T-cell (primary cell): ENCODE measurements at regions of chr15 and their contacts with region 1.

Region 1: GRCh38 chr15:85412956-85413854 is 32.8 kb downstream of the AKAP13 start:
- DNase-seq: peak; percentile 30 to 80 (median 56)
- ATAC-seq: peak; percentile 97 to 100 (median 100)
- H3K4me3 ChIP-seq: no peak overlapping the region
- H3K4me3 Mint-ChIP-seq: peak overlapping the region; percentile 10 to 60 (median 28)
- H3K27ac ChIP-seq: peak overlapping the region; percentile 71
- H3K27ac Mint-ChIP-seq: peak overlapping the region; percentile 89 to 92
- H3K4me1 ChIP-seq: peaks cover 9 to 13% of the 10 kb centered on the region in 2 experiments
- H3K4me1 Mint-ChIP-seq: peaks cover 64 to 76% (median 74%) of the 10 kb centered on the region in 3 donors
- H3K27me3 ChIP-seq: no peaks in the 10 kb centered on the region
- H3K27me3 Mint-ChIP-seq: no peaks in the 10 kb centered on the region

Region 2: DNA sequence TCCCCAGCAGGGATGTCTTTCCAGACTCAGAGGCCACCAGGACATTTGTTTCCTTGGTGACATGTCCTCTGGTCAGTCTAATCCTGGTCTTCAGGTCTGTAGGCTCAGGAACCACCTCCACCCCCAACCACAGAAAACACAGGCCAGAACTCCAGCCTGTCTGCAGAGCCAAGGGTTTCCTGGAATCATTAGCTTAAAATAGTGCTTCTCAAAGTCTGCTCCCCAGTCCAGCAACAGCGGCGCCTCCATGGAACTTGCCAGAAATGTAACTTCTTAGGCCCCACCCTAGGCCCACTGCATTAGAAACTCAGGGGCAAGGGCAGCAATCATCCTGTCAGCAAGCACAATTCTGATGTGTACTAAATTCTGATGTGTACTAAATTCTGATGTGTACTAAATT is 508.8 kb before region 1 on chr15:
- CTCF ChIA-PET with region 1: no interaction called
- POLR2A ChIA-PET with region 1: no interaction called
- DNase-seq: no peak
- ATAC-seq: no peak
- H3K4me3 ChIP-seq: no peak overlapping the region
- H3K4me3 Mint-ChIP-seq: no peak overlapping the region
- H3K27ac ChIP-seq: no peak overlapping the region
- H3K27ac Mint-ChIP-seq: no peak overlapping the region
- H3K4me1 ChIP-seq: no peaks in the 10 kb centered on the region
- H3K4me1 Mint-ChIP-seq: no peaks in the 10 kb centered on the region
- H3K27me3 ChIP-seq: peaks cover 0 to 3% of the 10 kb centered on the region in 2 experiments
- H3K27me3 Mint-ChIP-seq: peaks cover 0 to 2% of the 10 kb centered on the region in 2 donors

Region 3: GRCh38 chr15:85296615-85297402 is 116.4 kb before region 1 on chr15:
- CTCF ChIA-PET with region 1: interaction called, 13 to 61 read pairs
- POLR2A ChIA-PET with region 1: no interaction called
- DNase-seq: peak; percentile 29 to 83 (median 58)
- ATAC-seq: peak; percentile 92 to 99 (median 97)
- H3K4me3 ChIP-seq: peak overlapping the region in 1 of 2 donors; percentile 15
- H3K4me3 Mint-ChIP-seq: peak overlapping the region; percentile 49 to 59 (median 51)
- H3K27ac ChIP-seq: no peak overlapping the region
- H3K27ac Mint-ChIP-seq: peak overlapping the region; percentile 13 to 18
- H3K4me1 ChIP-seq: peaks cover 4 to 5% of the 10 kb centered on the region in 2 experiments
- H3K4me1 Mint-ChIP-seq: peaks cover 12 to 14% (median 12%) of the 10 kb centered on the region in 3 donors
- H3K27me3 ChIP-seq: peaks cover 0 to 7% of the 10 kb centered on the region in 2 experiments
- H3K27me3 Mint-ChIP-seq: peaks cover 0 to 6% of the 10 kb centered on the region in 2 donors

Region 4: GRCh38 chr15:85330901-85331588 is 82.2 kb before region 1 on chr15:
- CTCF ChIA-PET with region 1: interaction called, 3 to 23 read pairs
- POLR2A ChIA-PET with region 1: no interaction called
- DNase-seq: peak; percentile 28 to 79 (median 50)
- ATAC-seq: peak; percentile 67 to 84 (median 78)
- H3K4me3 ChIP-seq: peak overlapping the region; percentile 58 to 67
- H3K4me3 Mint-ChIP-seq: peak overlapping the region; percentile 84 to 94 (median 90)
- H3K27ac ChIP-seq: peak overlapping the region; percentile 88
- H3K27ac Mint-ChIP-seq: peak overlapping the region; percentile 97 to 98
- H3K4me1 ChIP-seq: peaks cover 15 to 29% of the 10 kb centered on the region in 2 experiments
- H3K4me1 Mint-ChIP-seq: peaks cover 49 to 60% (median 52%) of the 10 kb centered on the region in 3 donors
- H3K27me3 ChIP-seq: no peaks in the 10 kb centered on the region
- H3K27me3 Mint-ChIP-seq: no peaks in the 10 kb centered on the region

Region 5: DNA sequence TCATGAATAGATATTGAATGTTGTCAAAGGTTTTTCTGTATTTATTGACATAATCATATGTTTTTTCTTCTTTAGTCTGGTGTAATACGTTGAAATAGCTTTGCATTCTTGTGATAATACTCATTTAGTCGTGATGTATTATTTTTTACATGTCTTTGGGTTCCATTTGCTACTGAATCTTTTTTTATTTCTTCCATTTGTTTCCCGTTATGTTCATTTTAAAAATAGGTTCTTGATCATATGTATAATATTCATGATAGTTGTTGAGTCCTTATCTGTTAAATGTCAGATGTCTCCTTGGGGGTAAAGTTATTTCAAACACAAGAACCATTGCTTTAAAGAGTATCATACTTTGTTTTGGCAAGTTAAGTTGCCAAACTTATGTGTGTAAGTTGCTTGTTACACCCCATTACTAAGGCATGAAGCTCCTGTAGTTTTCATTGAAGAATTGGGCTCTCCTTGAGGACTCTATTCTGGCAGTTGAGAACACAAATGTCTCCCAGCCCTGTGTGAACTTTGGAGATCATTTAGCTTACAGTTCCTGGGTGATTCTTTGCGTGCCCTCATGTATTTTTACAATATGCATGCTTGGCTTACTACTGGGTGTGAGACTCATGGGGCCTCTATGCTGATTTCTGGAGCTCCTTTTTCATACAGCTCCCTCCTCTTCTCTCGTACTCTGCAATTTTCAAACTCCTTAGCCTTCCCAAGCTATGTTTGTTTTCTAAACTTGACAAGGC is 24.5 kb before region 1 on chr15:
- CTCF ChIA-PET with region 1: interaction called in 1 of 2 experiments, 10 read pairs
- POLR2A ChIA-PET with region 1: no interaction called
- DNase-seq: no peak
- ATAC-seq: no peak
- H3K4me3 ChIP-seq: no peak overlapping the region
- H3K4me3 Mint-ChIP-seq: no peak overlapping the region
- H3K27ac ChIP-seq: no peak overlapping the region
- H3K27ac Mint-ChIP-seq: no peak overlapping the region
- H3K4me1 ChIP-seq: peaks cover 0 to 6% of the 10 kb centered on the region in 2 experiments
- H3K4me1 Mint-ChIP-seq: peaks cover 39 to 44% (median 42%) of the 10 kb centered on the region in 3 donors
- H3K27me3 ChIP-seq: no peaks in the 10 kb centered on the region
- H3K27me3 Mint-ChIP-seq: no peaks in the 10 kb centered on the region

Region 6: GRCh38 chr15:85402195-85402881 is 10.9 kb before region 1 on chr15:
- CTCF ChIA-PET with region 1: interaction called, 5 to 32 read pairs
- POLR2A ChIA-PET with region 1: interaction called, 4 read pairs
- DNase-seq: no peak
- ATAC-seq: peak in 1 of 4 experiments; percentile 55
- H3K4me3 ChIP-seq: no peak overlapping the region
- H3K4me3 Mint-ChIP-seq: peak overlapping the region in 1 of 3 donors; percentile 31
- H3K27ac ChIP-seq: no peak overlapping the region
- H3K27ac Mint-ChIP-seq: peak overlapping the region; percentile 6 to 30
- H3K4me1 ChIP-seq: peaks cover 20 to 21% of the 10 kb centered on the region in 2 experiments
- H3K4me1 Mint-ChIP-seq: peaks cover 80 to 87% (median 85%) of the 10 kb centered on the region in 3 donors
- H3K27me3 ChIP-seq: no peaks in the 10 kb centered on the region
- H3K27me3 Mint-ChIP-seq: no peaks in the 10 kb centered on the region

Region 7: GRCh38 chr15:85515212-85515611 is 102.0 kb after region 1 on chr15:
- CTCF ChIA-PET with region 1: no interaction called
- POLR2A ChIA-PET with region 1: no interaction called
- DNase-seq: no peak
- ATAC-seq: no peak
- H3K4me3 ChIP-seq: no peak overlapping the region
- H3K4me3 Mint-ChIP-seq: no peak overlapping the region
- H3K27ac ChIP-seq: no peak overlapping the region
- H3K27ac Mint-ChIP-seq: no peak overlapping the region
- H3K4me1 ChIP-seq: no peaks in the 10 kb centered on the region
- H3K4me1 Mint-ChIP-seq: peaks cover 62 to 72% (median 70%) of the 10 kb centered on the region in 3 donors
- H3K27me3 ChIP-seq: no peaks in the 10 kb centered on the region
- H3K27me3 Mint-ChIP-seq: no peaks in the 10 kb centered on the region